Activated CD8-positive, alpha-beta T cell treated with anti-CD3 and anti-CD28 coated beads, Interleukin-2, amount 10 ng/mL, durations not matched to agents 7 days and 5 days (primary cell): ENCODE measurements at regions of chr11 and their contacts with region 1.

Region 1: GRCh38 chr11:68297812-68298658 is 14.4 kb upstream of the LRP5 start:
- DNase-seq: peak; percentile 79
- ATAC-seq: peak; percentile 99
- H3K4me3 Mint-ChIP-seq: no peak overlapping the region
- H3K27ac Mint-ChIP-seq: no peak overlapping the region
- H3K4me1 Mint-ChIP-seq: peaks cover 11% of the 10 kb centered on the region
- H3K27me3 Mint-ChIP-seq: peaks cover 7% of the 10 kb centered on the region

Region 2: GRCh38 chr11:68251765-68252164 is 46.3 kb before region 1 on chr11:
- CTCF ChIA-PET with region 1: interaction called, 170 read pairs
- POLR2A ChIA-PET with region 1: no interaction called
- DNase-seq: no peak
- ATAC-seq: no peak
- H3K4me3 Mint-ChIP-seq: no peak overlapping the region
- H3K27ac Mint-ChIP-seq: no peak overlapping the region
- H3K4me1 Mint-ChIP-seq: peaks cover 4% of the 10 kb centered on the region
- H3K27me3 Mint-ChIP-seq: peaks cover 4% of the 10 kb centered on the region

Region 3: DNA sequence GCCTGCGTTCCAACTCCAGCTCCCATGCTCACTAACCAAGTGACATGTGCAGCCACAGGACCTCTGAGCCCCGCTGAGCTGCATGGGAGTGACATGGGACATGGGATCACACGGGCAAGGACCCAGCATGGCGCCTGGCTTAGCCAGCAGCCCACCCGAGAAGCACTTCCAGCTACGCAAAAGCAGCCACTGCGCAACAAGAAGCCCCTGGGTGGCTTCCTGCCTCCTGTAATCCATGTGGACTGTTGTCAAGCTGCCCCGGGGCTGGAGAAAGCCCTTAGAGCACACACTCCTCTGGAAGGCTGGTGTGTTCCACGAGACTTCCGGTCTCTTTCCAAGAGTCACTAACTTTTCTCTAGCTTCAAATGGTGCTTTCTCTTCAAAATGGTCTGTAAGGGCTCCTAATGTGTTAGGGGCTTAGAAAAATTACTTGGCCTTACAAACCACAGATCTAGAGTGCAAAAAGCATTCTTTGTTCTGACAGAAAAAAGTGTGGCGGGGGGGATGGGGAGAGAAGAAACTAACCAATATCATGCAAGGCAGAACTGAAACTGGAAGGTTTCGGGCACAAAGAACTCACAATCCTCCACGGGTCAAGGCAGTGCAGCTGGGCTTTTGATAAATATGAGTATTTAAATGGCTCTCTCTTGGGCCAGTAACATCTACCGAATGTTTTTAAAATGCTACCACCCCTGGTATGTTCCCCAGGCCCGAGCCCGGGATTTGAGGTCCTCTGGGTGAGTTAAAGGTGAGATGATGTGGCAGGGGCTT is 31.7 kb before region 1 on chr11:
- CTCF ChIA-PET with region 1: interaction called, 79 read pairs
- POLR2A ChIA-PET with region 1: no interaction called
- DNase-seq: no peak
- ATAC-seq: no peak
- H3K4me3 Mint-ChIP-seq: no peak overlapping the region
- H3K27ac Mint-ChIP-seq: no peak overlapping the region
- H3K4me1 Mint-ChIP-seq: peaks cover 36% of the 10 kb centered on the region
- H3K27me3 Mint-ChIP-seq: no peaks in the 10 kb centered on the region

Region 4: DNA sequence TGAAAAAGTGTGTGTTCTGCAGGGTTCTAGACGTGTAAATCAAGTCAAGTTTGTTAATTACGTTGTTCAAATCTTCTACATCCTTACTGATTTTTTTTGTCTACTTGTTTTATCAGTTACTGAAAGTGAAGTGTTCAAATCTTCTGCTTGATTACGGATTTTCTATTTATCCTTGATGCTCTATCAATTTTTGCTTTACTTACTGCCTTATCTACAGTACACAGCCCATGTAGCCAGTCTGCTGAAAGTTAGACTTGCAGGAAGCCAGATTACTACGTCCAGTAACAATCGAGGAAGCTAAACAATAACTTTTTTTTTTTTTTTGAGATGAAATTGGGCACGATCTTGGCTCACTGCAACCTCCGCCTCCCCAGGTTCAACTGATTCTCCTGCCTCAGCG is 10.6 kb before region 1 on chr11:
- CTCF ChIA-PET with region 1: interaction called, 14 read pairs
- POLR2A ChIA-PET with region 1: no interaction called
- DNase-seq: no peak
- ATAC-seq: no peak
- H3K4me3 Mint-ChIP-seq: no peak overlapping the region
- H3K27ac Mint-ChIP-seq: no peak overlapping the region
- H3K4me1 Mint-ChIP-seq: peaks cover 19% of the 10 kb centered on the region
- H3K27me3 Mint-ChIP-seq: peaks cover 7% of the 10 kb centered on the region

Region 5: GRCh38 chr11:68351447-68352275 is 53.6 kb after region 1 on chr11:
- CTCF ChIA-PET with region 1: no interaction called
- POLR2A ChIA-PET with region 1: no interaction called
- DNase-seq: no peak
- ATAC-seq: no peak
- H3K4me3 Mint-ChIP-seq: no peak overlapping the region
- H3K27ac Mint-ChIP-seq: no peak overlapping the region
- H3K4me1 Mint-ChIP-seq: peaks cover 11% of the 10 kb centered on the region
- H3K27me3 Mint-ChIP-seq: no peaks in the 10 kb centered on the region

Region 6: DNA sequence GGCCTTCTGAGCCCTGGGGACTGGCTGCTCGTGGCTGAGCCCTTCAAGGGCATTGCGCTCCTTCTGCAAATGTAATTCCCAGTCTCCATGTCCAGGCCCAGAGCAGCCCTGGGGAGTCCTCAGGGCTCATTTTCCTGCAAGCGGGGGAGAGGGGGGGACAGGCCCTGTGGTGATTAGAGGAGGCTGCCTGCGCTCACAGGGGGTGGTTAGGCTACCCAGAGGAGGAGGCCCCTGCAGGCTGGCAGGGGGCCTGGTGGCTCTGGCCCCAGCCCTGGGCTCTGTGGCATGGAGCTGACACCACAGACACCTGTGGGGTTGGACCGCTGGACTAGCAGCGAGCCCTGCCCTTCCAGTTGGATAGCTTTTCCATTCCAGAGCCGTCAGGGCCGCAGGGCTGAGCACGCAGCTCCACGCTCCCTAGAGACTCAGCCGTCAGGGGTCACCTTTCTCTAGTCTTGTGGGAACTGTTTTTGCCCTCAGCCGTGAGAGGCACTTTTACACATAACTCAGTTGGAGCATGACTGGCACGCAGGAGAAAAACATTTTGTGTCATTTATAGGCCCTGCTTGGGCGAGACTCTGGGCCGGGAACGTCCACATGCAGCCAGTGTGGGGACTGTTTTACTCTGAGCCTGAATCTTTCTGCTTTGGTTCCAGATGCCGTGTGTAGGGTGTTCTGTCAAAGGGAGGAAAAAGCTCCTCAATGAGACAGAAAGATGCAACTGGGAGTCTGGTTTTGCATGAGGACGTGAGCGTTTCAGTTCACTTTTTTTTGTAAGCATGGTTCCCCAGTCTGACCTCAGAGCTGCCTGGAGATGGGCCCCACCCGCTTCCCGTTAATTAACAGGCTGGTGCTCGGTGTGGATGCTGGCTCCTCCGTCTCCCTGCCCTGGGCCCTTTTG is 72.4 kb after region 1 on chr11:
- CTCF ChIA-PET with region 1: no interaction called
- POLR2A ChIA-PET with region 1: no interaction called
- DNase-seq: no peak
- ATAC-seq: no peak
- H3K4me3 Mint-ChIP-seq: no peak overlapping the region
- H3K27ac Mint-ChIP-seq: no peak overlapping the region
- H3K4me1 Mint-ChIP-seq: peaks cover 9% of the 10 kb centered on the region
- H3K27me3 Mint-ChIP-seq: no peaks in the 10 kb centered on the region